ENCODE measurements at regions of chr5 and their contacts with region 1.

Region 1: DNA sequence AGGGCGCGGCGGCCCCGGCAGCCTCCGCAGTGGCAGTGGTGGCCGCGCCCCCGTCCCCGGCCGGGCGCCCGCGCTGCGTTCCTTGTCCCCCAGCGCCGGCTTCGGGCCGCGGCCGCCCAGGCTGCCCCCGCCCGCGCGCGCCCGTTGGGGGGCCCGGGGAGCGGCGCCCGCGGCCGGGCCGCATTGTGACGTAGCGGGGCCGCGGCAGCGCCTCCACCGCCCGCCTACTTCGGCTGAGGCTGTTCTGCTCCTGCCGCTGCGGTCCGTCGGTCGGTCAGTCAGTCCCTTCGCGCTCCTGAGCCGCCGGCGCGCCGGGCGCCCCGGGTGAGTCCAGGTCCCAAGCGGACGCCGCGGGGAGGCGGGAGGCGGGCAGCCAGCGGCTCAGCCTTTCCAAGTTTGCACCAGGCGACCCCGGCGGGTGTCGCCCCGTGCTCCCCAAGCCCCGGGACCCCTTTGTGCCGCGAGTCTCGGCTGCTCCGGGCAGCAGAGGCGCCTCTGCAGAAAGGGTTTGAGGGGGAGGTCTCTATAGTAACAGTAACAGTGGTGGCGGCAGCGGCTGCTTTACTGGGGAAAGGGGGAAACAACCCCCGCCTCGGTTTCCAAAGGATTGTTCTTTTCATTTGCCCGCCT is at the start of gene SNCAIP:
- DNase-seq: peak; percentile 58
- H3K4me3 ChIP-seq: peak within 1 kb of the TSS; percentile 59 to 89 (median 81)
- H3K27ac ChIP-seq: peak within 1 kb of the TSS; percentile 62
- H3K4me1 ChIP-seq: peaks cover 25% of the 10 kb centered on the region
- H3K27me3 ChIP-seq: no peaks in the 10 kb centered on the region
- CTCF ChIP-seq: no peak
- POLR2A ChIP-seq: no peak
- total RNA-seq, gene SNCAIP: 35.9 and 42.0 TPM in 2 replicates

Region 2: DNA sequence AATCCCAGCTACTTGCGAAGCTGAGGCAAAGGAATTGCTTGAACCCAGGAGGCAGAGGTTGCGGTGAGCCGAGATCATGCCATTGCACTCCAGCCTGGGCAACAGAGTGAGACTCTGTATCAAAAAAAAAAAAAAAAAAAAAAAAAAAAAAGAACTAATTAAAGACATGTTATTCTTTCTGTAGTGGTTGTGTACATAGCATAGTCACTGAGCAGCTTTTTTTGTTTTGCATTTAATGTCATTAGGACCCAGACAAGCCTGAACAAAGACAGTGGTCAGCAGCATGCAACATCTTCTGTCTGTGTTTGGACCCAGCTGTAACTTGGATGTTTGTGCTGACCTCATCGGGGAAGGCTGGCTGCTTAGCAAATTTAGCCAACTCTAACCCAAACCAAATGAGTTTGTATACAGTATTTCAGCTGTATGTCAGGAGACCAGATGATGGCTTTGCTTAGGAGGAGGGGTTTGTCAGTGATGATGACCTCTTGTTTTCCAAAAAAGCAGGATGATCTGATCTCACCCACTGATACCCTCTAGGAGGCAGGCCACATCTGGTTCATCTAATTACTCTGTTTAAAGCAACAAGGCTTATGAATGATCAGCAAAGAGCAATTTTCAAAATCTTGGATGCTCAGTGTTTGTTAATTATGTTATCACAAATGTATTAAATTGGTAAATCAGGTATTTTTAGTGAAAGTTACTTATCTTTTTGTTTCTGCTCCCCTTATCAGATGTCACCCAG is 39.5 kb after region 1 on chr5:
- CTCF ChIA-PET with region 1: no interaction called
- POLR2A ChIA-PET with region 1: no interaction called
- dilution Hi-C with region 1: no loop called
- intact Hi-C with region 1: loop called (anchors 2 kb)
- DNase-seq: no peak
- H3K4me3 ChIP-seq: no peak overlapping the region
- H3K27ac ChIP-seq: no peak overlapping the region
- H3K4me1 ChIP-seq: peaks cover 14% of the 10 kb centered on the region
- H3K27me3 ChIP-seq: no peaks in the 10 kb centered on the region
- CTCF ChIP-seq: no peak
- POLR2A ChIP-seq: no peak

Region 3: GRCh38 chr5:122358372-122358979 is 46.4 kb after region 1 on chr5:
- CTCF ChIA-PET with region 1: no interaction called
- POLR2A ChIA-PET with region 1: no interaction called
- dilution Hi-C with region 1: no loop called
- intact Hi-C with region 1: loop called (anchors 1 kb)
- DNase-seq: peak; percentile 75
- H3K4me3 ChIP-seq: no peak overlapping the region
- H3K27ac ChIP-seq: peak overlapping the region; percentile 32
- H3K4me1 ChIP-seq: peaks cover 12% of the 10 kb centered on the region
- H3K27me3 ChIP-seq: no peaks in the 10 kb centered on the region
- CTCF ChIP-seq: no peak
- POLR2A ChIP-seq: no peak

Region 4: GRCh38 chr5:122424132-122424531 is 112.1 kb after region 1 on chr5:
- CTCF ChIA-PET with region 1: no interaction called
- POLR2A ChIA-PET with region 1: no interaction called
- dilution Hi-C with region 1: no loop called
- intact Hi-C with region 1: no loop called
- DNase-seq: no peak
- H3K4me3 ChIP-seq: no peak overlapping the region
- H3K27ac ChIP-seq: no peak overlapping the region
- H3K4me1 ChIP-seq: no peaks in the 10 kb centered on the region
- H3K27me3 ChIP-seq: no peaks in the 10 kb centered on the region
- CTCF ChIP-seq: no peak
- POLR2A ChIP-seq: no peak

Region 5: GRCh38 chr5:123673109-123673508 is 1361.0 kb after region 1 on chr5:
- CTCF ChIA-PET with region 1: no interaction called
- POLR2A ChIA-PET with region 1: no interaction called
- dilution Hi-C with region 1: no loop called
- intact Hi-C with region 1: no loop called
- DNase-seq: peak; percentile 5
- H3K4me3 ChIP-seq: no peak overlapping the region
- H3K27ac ChIP-seq: no peak overlapping the region
- H3K4me1 ChIP-seq: no peaks in the 10 kb centered on the region
- H3K27me3 ChIP-seq: no peaks in the 10 kb centered on the region
- CTCF ChIP-seq: no peak
- POLR2A ChIP-seq: no peak

Measured in endothelial cell of umbilical vein (primary cell).